OCI-LY7 (cell line): ENCODE measurements at regions of chr1 and their contacts with region 1.

Region 1: DNA sequence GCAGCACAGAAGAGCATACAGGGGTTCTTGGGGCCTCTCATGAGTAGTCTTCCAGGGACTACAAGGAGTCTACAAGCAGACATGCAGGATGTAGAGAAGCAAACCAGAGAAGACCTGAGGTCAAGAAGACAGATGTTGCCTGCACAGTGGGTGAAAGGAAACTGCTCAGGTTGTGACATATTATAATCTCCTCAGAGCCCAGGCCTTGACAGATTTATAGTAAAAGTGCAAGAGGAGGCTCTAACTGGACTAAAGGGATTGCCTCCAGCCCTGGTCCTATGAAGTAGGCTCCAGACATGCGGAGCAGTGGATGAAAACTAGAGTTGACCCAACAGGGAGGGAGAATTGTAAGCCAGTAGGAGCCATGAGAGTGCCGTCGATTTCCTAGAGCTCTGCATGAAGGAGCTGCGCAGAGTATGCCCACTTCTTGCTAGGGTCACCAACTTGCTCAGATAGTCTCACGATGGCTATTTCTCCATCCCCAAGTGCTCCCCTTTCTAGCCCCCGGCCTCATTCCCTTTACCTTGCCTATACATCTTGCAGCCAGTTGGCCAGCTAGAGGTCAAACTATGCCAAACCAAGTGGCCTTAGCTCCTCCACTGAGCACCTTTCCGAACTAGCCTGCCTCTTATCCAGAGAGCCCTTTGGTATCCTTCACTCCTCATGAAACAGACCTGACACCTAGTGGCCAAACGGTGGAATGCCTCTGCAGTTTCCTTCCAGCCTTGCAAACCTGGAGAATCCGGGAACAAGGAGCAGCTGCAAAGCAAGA is 36.2 kb upstream of the IPO9 start:
- DNase-seq: peak; percentile 77
- H3K4me3 ChIP-seq: no peak overlapping the region
- H3K27ac ChIP-seq: no peak overlapping the region
- H3K4me1 ChIP-seq: peaks cover 14% of the 10 kb centered on the region
- CTCF ChIP-seq: peak; percentile 99

Region 2: GRCh38 chr1:201559679-201560162 is 233.0 kb before region 1 on chr1:
- CTCF ChIA-PET with region 1: interaction called, 3 read pairs
- POLR2A ChIA-PET with region 1: no interaction called
- intact Hi-C with region 1: loop called (anchors 1 kb)
- DNase-seq: peak; percentile 76
- H3K4me3 ChIP-seq: no peak overlapping the region
- H3K27ac ChIP-seq: no peak overlapping the region
- H3K4me1 ChIP-seq: no peaks in the 10 kb centered on the region
- CTCF ChIP-seq: peak; percentile 93

Region 3: DNA sequence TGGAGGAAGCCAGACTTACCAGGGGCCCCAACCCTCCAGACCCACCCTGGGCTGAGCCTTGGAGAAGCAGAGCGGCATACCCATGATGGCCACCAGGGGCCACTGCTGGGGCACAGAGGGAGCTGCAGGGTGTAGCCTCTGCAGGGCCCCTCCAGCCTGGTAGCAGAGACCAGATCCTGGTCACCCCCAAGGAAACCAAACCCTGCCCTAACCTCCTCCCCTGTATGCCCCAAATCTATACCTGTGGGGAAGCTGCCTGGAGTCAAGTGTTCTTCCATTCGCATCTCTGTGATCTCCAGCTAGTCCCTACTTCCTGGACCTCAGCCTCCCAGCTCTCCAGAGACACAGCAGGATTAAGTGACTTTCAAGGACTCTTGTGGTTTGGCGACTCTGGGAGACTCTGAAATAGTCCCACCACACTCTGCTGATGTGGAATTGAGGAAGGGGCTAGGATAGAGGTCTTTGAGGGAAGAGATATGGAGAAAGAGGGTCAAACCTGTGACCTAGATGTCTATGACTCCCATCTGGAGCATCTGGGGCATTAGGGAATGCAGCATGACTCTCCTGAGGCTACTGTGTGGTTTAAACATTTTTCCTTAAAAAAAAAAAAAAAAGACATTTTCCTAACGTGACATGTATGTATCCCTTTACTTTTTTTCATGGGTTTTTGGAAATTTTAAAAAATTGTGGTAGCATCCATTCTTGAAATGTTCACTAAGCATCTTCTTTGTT is 83.0 kb before region 1 on chr1:
- CTCF ChIA-PET with region 1: interaction called, 13 read pairs
- POLR2A ChIA-PET with region 1: interaction called, 4 read pairs
- intact Hi-C with region 1: loop called (anchors 1 kb)
- DNase-seq: peak; percentile 73
- H3K4me3 ChIP-seq: no peak overlapping the region
- H3K27ac ChIP-seq: no peak overlapping the region
- H3K4me1 ChIP-seq: peaks cover 4% of the 10 kb centered on the region
- CTCF ChIP-seq: peak; percentile 79

Region 4: GRCh38 chr1:201895913-201896807 is 103.4 kb after region 1 on chr1:
- CTCF ChIA-PET with region 1: no interaction called
- POLR2A ChIA-PET with region 1: no interaction called
- intact Hi-C with region 1: no loop called
- DNase-seq: peak; percentile 85
- H3K4me3 ChIP-seq: no peak overlapping the region
- H3K27ac ChIP-seq: no peak overlapping the region
- H3K4me1 ChIP-seq: no peaks in the 10 kb centered on the region
- CTCF ChIP-seq: peak; percentile 99